Ovary (tissue), 10 donors: ENCODE measurements at regions of chr16 and their contacts with region 1.

Region 1: DNA sequence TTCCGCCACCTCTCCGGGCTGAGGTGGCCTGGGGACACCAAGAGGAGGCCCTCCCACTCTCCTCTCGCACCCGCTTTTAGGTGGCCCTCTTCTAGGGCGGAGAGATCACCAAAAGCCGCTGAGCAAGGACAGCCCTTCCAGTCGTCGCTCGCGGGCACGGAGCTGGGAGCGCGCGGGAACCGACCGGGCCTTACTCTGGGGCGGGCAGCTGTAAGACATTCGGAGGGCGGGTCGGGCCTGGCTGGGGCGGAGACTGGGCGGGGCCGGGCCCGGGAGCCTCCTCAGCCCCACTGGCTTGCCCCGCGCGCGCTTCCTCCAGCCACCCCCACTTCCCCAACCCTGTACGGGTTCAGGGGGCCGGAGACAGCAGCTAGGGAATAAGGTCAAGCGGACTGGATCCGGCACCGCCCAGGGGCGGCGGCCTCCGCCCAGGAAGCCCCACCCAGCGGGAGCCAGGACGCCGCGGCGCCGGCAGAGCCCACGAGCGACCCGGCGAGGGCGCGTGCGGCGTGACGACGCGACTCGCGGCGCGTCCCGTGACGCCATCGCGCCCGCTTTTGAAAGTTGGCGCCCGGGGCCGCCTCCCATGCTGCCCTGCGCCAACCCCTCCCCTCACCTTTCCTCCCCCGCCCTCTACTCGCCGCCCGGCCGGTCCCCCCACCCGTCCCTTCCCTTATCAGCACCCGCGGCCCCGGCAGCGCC is 351 bp upstream of the CTCF start:
- DNase-seq: peak; percentile 94 to 96 (median 95)
- H3K4me3 ChIP-seq: peak overlapping the region; percentile 89
- H3K27ac ChIP-seq: peak overlapping the region; percentile 98
- H3K4me1 ChIP-seq: peaks cover 4% of the 10 kb centered on the region
- H3K27me3 ChIP-seq: no peaks in the 10 kb centered on the region
- CTCF ChIP-seq: no peak
- EP300 ChIP-seq: no peak
- POLR2A ChIP-seq: no peak

Region 2: DNA sequence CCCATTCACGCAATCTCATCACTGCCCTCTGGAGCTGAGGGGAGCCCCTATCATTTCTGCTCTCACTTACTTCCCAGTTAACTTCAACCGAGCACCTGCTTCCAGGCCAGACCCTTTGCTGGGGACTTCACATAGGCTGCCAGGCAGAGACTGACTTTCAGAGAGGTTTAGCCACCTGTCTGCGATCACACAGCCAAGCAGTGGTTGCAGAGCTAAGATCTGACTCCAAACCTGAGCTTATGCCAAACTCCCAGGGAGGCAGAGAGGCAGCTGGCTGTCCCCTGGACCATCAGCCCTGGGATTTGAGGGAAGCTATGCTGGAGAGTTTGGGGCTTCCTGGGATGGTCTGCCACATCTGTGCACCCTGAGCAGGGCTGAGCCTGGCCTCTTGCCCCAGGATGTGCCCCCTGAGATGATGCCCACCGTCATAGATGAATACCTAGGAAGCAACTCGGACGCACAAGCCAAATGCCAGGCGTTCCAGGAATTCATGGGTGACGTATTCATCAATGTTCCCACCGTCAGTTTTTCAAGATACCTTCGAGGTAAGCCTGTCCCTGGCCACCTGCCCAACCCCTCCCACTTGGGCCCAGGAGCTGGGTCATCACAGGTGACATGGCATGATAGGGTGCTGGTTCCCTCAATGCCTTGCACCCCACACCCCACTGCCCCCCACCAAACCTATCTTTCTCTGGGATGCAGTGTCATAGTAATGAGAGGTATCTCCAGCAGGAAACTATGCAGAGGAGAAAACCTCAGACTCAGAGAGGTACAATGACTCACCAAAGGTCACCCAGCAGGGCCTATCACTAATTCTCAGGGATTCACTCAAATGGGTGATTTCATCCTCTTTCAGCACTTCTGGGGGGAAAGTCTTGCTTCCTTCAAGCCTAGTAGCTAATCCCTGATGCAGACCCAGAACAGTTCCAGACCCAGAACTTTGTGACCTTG is 590.9 kb before region 1 on chr16:
- intact Hi-C with region 1: no loop called
- DNase-seq: no peak
- H3K4me3 ChIP-seq: no peak overlapping the region
- H3K27ac ChIP-seq: no peak overlapping the region
- H3K4me1 ChIP-seq: no peaks in the 10 kb centered on the region
- H3K27me3 ChIP-seq: no peaks in the 10 kb centered on the region
- CTCF ChIP-seq: no peak
- EP300 ChIP-seq: no peak
- POLR2A ChIP-seq: no peak

Region 3: GRCh38 chr16:67480833-67481560 is 81.0 kb before region 1 on chr16 and contains the start of gene ATP6V0D1:
- intact Hi-C with region 1: loop called in 1 of 4 experiments (anchors 5 kb)
- DNase-seq: peak; percentile 98 to 100 (median 99)
- H3K4me3 ChIP-seq: peak within 1 kb of the TSS; percentile 93
- H3K27ac ChIP-seq: peak within 1 kb of the TSS; percentile 68 to 69
- H3K4me1 ChIP-seq: peaks cover 15% of the 10 kb centered on the region
- H3K27me3 ChIP-seq: no peaks in the 10 kb centered on the region
- CTCF ChIP-seq: peak; percentile 90 to 99 (median 96)
- EP300 ChIP-seq: no peak
- POLR2A ChIP-seq: peak; percentile 64
- total RNA-seq, gene ATP6V0D1: 35.8 to 113 (median 63.0) TPM

Region 4: GRCh38 chr16:67528222-67528869 is 33.6 kb before region 1 on chr16 and contains the start of gene RIPOR1:
- intact Hi-C with region 1: loop called in 1 of 4 experiments (anchors 2 kb)
- DNase-seq: peak; percentile 58 to 75 (median 68)
- H3K4me3 ChIP-seq: peak within 1 kb of the TSS; percentile 88
- H3K27ac ChIP-seq: peak within 1 kb of the TSS; percentile 56 to 85
- H3K4me1 ChIP-seq: peaks cover 12% of the 10 kb centered on the region
- H3K27me3 ChIP-seq: no peaks in the 10 kb centered on the region
- CTCF ChIP-seq: no peak
- EP300 ChIP-seq: no peak
- POLR2A ChIP-seq: no peak
- total RNA-seq, gene RIPOR1: 22.3 to 96.3 (median 85.6) TPM

Region 5: GRCh38 chr16:67641779-67642708 is 80.1 kb after region 1 on chr16:
- intact Hi-C with region 1: loop called in 2 of 4 experiments (anchors 5 kb)
- DNase-seq: peak in 1 of 5 donors; percentile 43
- H3K4me3 ChIP-seq: no peak overlapping the region
- H3K27ac ChIP-seq: no peak overlapping the region
- H3K4me1 ChIP-seq: no peaks in the 10 kb centered on the region
- H3K27me3 ChIP-seq: no peaks in the 10 kb centered on the region
- CTCF ChIP-seq: no peak
- EP300 ChIP-seq: no peak
- POLR2A ChIP-seq: no peak

Region 6: DNA sequence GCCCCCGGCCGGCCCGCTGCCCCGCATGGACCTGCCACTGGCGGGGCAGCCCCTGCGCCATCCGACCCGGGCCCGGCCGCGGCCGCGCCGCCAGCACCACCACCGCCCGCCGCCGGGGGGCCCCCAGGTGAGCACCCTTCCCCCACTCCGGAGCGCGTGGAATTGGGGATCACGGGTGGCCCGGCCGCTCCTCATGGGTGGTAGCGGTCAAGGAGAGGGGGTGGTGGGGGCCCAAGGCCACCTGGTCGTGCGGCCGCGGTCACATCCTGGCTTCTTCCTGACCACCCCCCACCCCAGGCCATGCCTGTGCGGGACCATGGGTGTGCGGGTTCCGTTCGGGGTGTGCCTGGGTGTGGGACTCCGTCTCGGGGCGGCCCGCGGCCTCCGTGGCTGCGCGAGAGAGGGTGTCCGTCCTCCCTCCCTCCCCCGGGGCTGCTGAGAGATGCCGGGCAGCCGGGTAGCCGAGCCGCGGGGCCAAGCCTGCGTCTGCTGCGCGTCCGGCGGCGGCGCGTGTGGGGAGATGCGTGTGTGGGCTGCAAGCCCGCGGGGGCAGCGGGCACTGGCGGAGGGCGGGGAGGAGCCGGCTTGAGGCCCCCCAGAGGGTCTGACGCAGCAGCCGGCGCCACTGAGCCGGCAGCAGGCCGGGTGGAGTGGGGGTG is 91.3 kb after region 1 on chr16:
- intact Hi-C with region 1: loop called in 2 of 4 experiments (anchors 5 kb)
- DNase-seq: peak in 2 of 5 donors; percentile 39 to 53
- H3K4me3 ChIP-seq: peak overlapping the region; percentile 16
- H3K27ac ChIP-seq: no peak overlapping the region
- H3K4me1 ChIP-seq: peaks cover 8% of the 10 kb centered on the region
- H3K27me3 ChIP-seq: peaks cover 6% of the 10 kb centered on the region
- CTCF ChIP-seq: peak in 2 of 3 donors; percentile 16 to 21
- EP300 ChIP-seq: no peak
- POLR2A ChIP-seq: no peak

Region 7: GRCh38 chr16:67667817-67668494 is 106.0 kb after region 1 on chr16:
- intact Hi-C with region 1: loop called in 1 of 4 experiments (anchors 5 kb)
- DNase-seq: peak; percentile 75 to 85 (median 81)
- H3K4me3 ChIP-seq: peak overlapping the region; percentile 66
- H3K27ac ChIP-seq: peak overlapping the region in 1 of 2 donors; percentile 65
- H3K4me1 ChIP-seq: peaks cover 10% of the 10 kb centered on the region
- H3K27me3 ChIP-seq: no peaks in the 10 kb centered on the region
- CTCF ChIP-seq: peak; percentile 85 to 92 (median 89)
- EP300 ChIP-seq: no peak
- POLR2A ChIP-seq: no peak